Gastrocnemius medialis (tissue), 4 donors: ENCODE measurements at regions of chr14 and their contacts with region 1.

Region 1: DNA sequence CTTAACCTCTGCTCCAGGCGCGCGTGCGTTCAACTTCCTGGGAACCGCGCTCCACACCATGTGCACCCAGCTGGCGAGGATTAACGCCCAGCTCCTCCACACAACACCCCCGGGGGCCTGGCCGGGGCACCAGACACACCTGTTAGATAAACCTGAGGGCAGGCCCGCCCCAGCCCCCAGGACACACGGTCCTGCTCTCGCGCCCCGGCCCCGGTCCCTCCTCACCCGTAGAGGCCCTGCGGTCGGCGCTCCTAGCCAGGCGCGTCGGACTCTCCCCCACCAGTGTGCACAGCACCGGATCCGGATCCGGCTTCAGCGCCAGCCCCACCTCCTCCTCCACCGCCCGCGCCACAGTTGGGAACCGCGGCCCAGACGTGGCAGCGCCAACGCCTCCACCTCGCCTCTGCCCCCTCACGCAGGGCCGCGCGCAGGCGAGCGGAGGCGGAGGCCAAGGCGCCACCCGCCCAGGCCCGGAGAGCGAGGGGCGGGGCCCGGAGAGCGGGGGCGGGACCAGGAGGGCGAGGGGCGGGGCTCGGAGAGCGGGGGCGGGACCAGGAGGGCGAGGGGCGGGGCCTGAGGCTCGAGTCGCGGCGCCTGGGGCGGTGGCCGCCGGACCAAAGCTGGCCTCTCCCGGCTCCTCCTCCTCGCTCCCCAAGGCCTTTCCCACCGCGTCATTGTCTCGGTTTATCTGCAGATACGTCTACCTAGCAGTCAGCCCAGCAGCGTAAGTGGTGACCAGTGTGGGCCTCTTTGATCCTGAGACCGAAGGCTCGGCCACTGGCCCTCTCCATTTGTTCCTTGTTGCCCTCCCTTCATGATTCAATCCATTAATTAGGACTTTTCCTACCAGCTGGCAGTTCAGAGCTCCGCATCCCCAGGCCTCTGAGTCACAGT is at the start of gene GNPNAT1:
- DNase-seq: peak; percentile 67 to 74
- ATAC-seq: peak; percentile 85 to 86
- H3K4me3 ChIP-seq: peak within 1 kb of the TSS; percentile 86 to 93 (median 88)
- H3K27ac ChIP-seq: peak within 1 kb of the TSS; percentile 87 to 90 (median 88)
- H3K4me1 ChIP-seq: peaks cover 18% of the 10 kb centered on the region in 2 donors
- H3K27me3 ChIP-seq: no peaks in the 10 kb centered on the region
- CTCF ChIP-seq: no peak
- POLR2A ChIP-seq: peak; percentile 51 to 68
- total RNA-seq, gene GNPNAT1: 10.0 to 19.4 (median 12.4) TPM

Region 2: DNA sequence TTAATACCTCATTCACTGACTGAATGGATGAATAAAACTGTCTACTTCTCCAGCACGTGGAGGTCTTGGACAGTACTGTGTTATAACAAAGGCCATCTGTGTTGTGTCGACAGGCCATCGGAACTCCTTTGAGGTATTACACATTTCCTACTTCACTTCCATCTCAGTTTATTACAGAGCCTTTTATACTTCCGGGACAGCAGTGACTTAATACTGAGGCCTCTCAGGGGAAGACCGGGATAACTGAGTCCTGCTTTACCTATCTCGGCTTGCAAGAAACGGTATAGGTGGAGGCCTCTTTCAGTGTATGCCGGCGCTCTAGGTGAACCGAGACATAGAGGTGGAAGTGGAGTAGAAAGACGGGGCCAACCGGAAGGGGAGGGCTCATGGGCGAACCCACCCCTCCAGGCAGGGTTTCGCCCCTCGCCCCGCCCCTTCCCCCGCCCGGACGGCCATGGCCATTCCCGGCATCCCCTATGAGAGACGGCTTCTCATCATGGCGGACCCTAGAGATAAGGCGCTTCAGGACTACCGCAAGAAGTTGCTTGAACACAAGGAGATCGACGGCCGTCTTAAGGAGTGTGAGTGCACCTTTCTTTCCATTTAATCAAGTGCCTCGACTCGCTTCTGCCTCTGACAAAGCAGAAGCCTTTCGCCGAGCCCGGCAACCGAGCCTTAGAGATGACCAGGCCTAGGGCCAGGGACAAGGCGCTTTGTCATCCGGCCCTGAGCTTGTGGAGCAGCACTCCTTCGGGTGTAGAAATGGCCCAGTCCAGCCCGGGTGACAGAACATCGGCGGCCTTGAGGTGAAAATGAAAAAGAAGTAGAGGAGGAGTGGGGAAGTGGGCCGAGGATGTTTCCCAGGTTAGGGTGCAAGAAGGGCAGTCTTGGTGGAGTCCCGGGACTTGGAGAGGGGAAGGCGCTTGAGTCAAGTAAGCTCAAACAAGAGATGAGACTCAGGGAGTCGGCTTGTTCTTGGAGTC is 84.4 kb before region 1 on chr14 and contains the start of gene PSMC6:
- in situ Hi-C with region 1: no loop called
- intact Hi-C with region 1: loop called (anchors 5 kb)
- DNase-seq: peak; percentile 93 to 94
- ATAC-seq: peak; percentile 98
- H3K4me3 ChIP-seq: peak within 1 kb of the TSS; percentile 76 to 94 (median 88)
- H3K27ac ChIP-seq: peak within 1 kb of the TSS; percentile 92 to 95 (median 94)
- H3K4me1 ChIP-seq: peaks cover 16 to 20% of the 10 kb centered on the region in 2 donors
- H3K27me3 ChIP-seq: no peaks in the 10 kb centered on the region
- CTCF ChIP-seq: no peak
- POLR2A ChIP-seq: peak; percentile 67 to 78
- total RNA-seq, gene PSMC6: 158 to 251 (median 178) TPM